Activated CD8-positive, alpha-beta T cell treated with anti-CD3 and anti-CD28 coated beads for 36 hours (primary cell): ENCODE measurements at regions of chr6 and their contacts with region 1.

Region 1: GRCh38 chr6:53484476-53485280 is 60.2 kb downstream of the GCLC start:
- DNase-seq: peak; percentile 89
- ATAC-seq: peak; percentile 64
- H3K4me3 Mint-ChIP-seq: no peak overlapping the region
- H3K27ac Mint-ChIP-seq: no peak overlapping the region
- H3K4me1 Mint-ChIP-seq: peaks cover 2% of the 10 kb centered on the region
- H3K27me3 Mint-ChIP-seq: peaks cover 29% of the 10 kb centered on the region
- CTCF ChIP-seq: peak; percentile 98

Region 2: DNA sequence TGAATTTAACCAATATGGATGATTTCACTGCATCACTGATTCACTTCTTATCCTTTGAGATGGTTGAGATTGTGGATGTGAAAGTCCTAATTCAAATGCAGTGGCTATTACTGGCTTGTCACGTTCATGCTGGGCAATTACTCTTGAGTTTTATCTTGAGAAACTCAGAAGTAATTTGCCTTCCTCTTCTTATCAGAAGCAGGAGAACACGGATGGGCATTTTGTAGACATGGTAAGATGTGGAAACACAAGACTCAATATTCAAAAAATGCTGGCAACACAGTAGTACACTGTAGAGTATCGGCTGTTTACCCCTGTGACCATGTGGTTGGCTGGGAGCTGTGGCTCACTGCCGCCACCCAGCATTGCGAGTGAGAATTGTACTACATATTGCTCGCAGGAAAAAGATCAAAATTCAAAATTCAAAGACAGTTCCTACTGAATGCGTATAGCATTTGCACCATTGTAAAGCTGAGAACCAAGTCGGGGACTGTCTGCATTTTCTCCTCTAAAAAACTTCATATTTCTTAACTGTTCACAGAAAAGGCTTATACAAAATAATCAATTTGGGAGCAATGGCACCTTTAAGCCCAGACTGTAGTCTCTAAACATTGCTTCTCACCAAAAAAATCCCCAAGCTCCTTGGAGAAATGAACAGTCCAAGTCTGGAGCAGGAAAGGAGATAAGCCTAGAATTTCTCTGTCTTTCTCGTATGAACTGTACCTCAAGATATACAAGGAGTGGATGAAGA is 74.0 kb before region 1 on chr6:
- CTCF ChIA-PET with region 1: interaction called, 20 read pairs
- POLR2A ChIA-PET with region 1: no interaction called
- intact Hi-C with region 1: no loop called
- DNase-seq: peak; percentile 70
- ATAC-seq: peak; percentile 96
- H3K4me3 Mint-ChIP-seq: no peak overlapping the region
- H3K27ac Mint-ChIP-seq: no peak overlapping the region
- H3K4me1 Mint-ChIP-seq: peaks cover 2% of the 10 kb centered on the region
- H3K27me3 Mint-ChIP-seq: no peaks in the 10 kb centered on the region
- CTCF ChIP-seq: peak; percentile 71

Region 3: DNA sequence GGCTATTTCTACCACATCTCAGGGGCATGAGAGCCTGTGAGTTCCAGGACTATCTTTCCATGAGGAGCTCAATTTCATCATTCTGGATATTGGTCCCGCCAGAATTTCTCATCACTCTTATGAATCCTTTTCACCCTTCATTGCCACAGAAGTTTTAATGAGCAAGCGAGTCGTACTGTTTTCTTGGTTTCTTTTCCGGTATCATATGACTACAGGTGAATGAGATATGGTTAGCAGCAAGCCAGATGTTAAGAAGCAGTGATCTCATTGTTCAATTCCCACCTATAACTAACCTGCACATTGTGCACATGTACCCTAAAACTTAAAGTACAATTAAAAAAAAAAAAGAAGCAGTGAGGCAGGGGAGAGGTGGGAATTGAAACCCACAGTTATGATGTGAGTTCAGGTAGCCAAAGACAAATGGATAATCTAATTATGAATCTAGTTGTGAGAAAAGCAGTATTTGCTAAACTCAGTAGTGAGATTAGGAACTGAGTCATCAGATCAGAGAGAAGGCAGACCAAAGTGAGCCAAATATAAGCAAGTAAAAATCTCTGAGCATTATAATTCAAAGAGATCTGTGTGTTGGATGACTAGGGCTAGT is 57.9 kb before region 1 on chr6:
- CTCF ChIA-PET with region 1: interaction called, 21 read pairs
- POLR2A ChIA-PET with region 1: no interaction called
- intact Hi-C with region 1: no loop called
- DNase-seq: no peak
- ATAC-seq: peak; percentile 87
- H3K4me3 Mint-ChIP-seq: no peak overlapping the region
- H3K27ac Mint-ChIP-seq: peak overlapping the region; percentile 49
- H3K4me1 Mint-ChIP-seq: peaks cover 37% of the 10 kb centered on the region
- H3K27me3 Mint-ChIP-seq: peaks cover 7% of the 10 kb centered on the region
- CTCF ChIP-seq: no peak

Region 4: GRCh38 chr6:53432318-53433161 is 52.1 kb before region 1 on chr6:
- CTCF ChIA-PET with region 1: interaction called, 21 read pairs
- POLR2A ChIA-PET with region 1: no interaction called
- intact Hi-C with region 1: loop called (anchors 5 kb)
- DNase-seq: no peak
- ATAC-seq: no peak
- H3K4me3 Mint-ChIP-seq: no peak overlapping the region
- H3K27ac Mint-ChIP-seq: no peak overlapping the region
- H3K4me1 Mint-ChIP-seq: peaks cover 39% of the 10 kb centered on the region
- H3K27me3 Mint-ChIP-seq: no peaks in the 10 kb centered on the region
- CTCF ChIP-seq: no peak

Region 5: DNA sequence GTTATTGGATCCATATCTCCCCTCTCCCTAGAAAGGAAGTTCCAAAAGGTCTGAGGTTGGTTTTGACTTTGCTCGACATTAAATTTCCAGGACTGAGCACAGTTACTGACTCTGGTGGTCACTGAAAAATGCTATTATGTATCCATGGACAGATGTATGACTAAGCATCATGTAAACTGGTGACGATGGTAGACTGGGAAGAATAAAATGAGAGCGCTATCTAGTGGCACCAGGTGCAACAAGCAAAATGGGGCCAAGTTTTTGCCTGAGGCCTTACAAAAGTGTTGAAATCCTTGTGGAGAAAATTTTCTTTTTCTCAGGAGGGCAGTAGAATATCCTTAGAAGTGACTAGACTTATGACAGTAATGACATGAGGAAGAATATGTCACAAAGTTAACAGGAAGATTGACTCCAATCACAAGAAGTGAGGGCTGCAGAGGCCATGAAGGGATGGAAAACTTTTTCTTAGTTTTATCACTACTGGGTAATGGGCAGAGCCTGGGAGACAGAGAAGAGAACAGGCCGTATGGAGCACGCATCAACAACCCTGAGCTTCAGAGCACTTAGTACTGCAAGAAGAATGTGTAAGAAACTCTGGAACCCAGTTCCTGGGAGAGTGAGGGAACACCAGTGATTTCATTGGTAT is 47.0 kb before region 1 on chr6:
- CTCF ChIA-PET with region 1: interaction called, 13 read pairs
- POLR2A ChIA-PET with region 1: no interaction called
- intact Hi-C with region 1: loop called (anchors 5 kb)
- DNase-seq: peak; percentile 28
- ATAC-seq: peak; percentile 68
- H3K4me3 Mint-ChIP-seq: no peak overlapping the region
- H3K27ac Mint-ChIP-seq: no peak overlapping the region
- H3K4me1 Mint-ChIP-seq: peaks cover 16% of the 10 kb centered on the region
- H3K27me3 Mint-ChIP-seq: peaks cover 4% of the 10 kb centered on the region
- CTCF ChIP-seq: peak; percentile 50

Region 6: GRCh38 chr6:53469163-53469562 is 15.5 kb before region 1 on chr6:
- CTCF ChIA-PET with region 1: interaction called, 37 read pairs
- POLR2A ChIA-PET with region 1: no interaction called
- intact Hi-C with region 1: no loop called
- DNase-seq: no peak
- ATAC-seq: no peak
- H3K4me3 Mint-ChIP-seq: no peak overlapping the region
- H3K27ac Mint-ChIP-seq: no peak overlapping the region
- H3K4me1 Mint-ChIP-seq: no peaks in the 10 kb centered on the region
- H3K27me3 Mint-ChIP-seq: no peaks in the 10 kb centered on the region
- CTCF ChIP-seq: no peak